ENCODE measurements at regions of chr11 and their contacts with region 1.

Region 1: DNA sequence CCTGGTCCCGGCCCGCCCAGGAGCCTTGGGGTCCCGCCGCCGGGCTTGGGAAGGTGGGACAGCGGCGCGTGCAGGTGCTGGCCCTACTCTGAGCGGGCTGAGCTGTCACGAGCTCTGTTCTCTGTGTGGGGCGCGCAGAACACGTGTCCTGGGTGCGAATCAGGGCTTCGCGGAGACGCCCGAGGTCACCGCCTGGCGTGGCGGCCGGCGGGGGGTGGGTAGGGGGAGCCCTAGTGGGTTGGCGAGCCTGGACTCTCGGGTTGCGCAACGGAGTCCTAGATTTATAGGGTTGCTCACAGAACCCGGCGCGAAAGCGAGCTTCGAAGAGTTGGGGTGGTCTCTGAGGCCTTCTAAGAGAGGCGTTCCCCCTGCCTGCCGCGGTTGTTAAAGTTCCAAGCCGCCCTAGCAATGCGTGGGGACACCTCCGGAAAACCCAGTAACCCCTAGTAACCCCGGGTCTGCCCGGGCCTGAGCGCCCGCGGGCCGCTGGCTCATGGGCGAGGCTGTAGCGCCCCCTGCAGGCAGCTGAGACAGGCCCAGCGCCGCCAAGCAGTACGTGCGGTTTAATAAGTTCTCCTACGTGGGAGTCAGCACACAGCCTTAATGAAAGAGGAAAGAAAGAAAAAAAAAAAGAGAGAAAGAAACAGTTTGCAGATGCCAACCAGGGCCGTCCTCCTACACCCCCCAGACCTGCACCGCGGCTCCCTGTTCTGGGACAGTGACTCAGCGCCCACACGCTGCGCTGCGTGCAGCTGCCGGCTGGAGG is 2.8 kb downstream of the ADM start:
- DNase-seq: peak; percentile 92
- ATAC-seq: peak; percentile 61

Region 2: GRCh38 chr11:9861860-9862725 is 445.5 kb before region 1 on chr11:
- intact Hi-C with region 1: loop called (anchors 5 kb)
- DNase-seq: no peak
- ATAC-seq: peak; percentile 85

Region 3: GRCh38 chr11:10122326-10123197 is 185.1 kb before region 1 on chr11:
- intact Hi-C with region 1: loop called (anchors 10 kb)
- DNase-seq: no peak
- ATAC-seq: peak; percentile 23

Region 4: GRCh38 chr11:10208131-10208575 is 99.5 kb before region 1 on chr11:
- intact Hi-C with region 1: loop called (anchors 5 kb)
- DNase-seq: no peak
- ATAC-seq: peak; percentile 60